ENCODE measurements at regions of chrX and their contacts with region 1.

Region 1: GRCh38 chrX:13761606-13762414 is 27.3 kb downstream of the OFD1 start:
- DNase-seq: no peak
- H3K4me3 ChIP-seq: no peak overlapping the region
- H3K27ac ChIP-seq: no peak overlapping the region
- H3K27me3 ChIP-seq: no peaks in the 10 kb centered on the region
- CTCF ChIP-seq: no peak

Region 2: GRCh38 chrX:13898083-13898482 is 136.3 kb after region 1 on chrX:
- CTCF ChIA-PET with region 1: no interaction called
- POLR2A ChIA-PET with region 1: interaction called, 11 read pairs
- DNase-seq: no peak
- H3K4me3 ChIP-seq: no peak overlapping the region
- H3K27ac ChIP-seq: no peak overlapping the region
- H3K27me3 ChIP-seq: no peaks in the 10 kb centered on the region
- CTCF ChIP-seq: 0 out of 2 replicates have a peak, but pooled peaks have one; percentile 11